GM12878 (cell line): ENCODE measurements at regions of chr6 and their contacts with region 1.

Region 1: GRCh38 chr6:17803409-17803808 is 96.7 kb upstream of the NUP153 start:
- DNase-seq: no peak
- ATAC-seq: no peak
- H3K4me3 ChIP-seq: no peak overlapping the region
- H3K27ac ChIP-seq: no peak overlapping the region
- H3K4me1 ChIP-seq: no peaks in the 10 kb centered on the region
- H3K27me3 ChIP-seq: no peaks in the 10 kb centered on the region
- CTCF ChIP-seq: no peak
- EP300 ChIP-seq: no peak
- POLR2A ChIP-seq: no peak
- RAD21 ChIP-seq: no peak

Region 2: GRCh38 chr6:17589406-17590096 is 213.9 kb before region 1 on chr6:
- CTCF ChIA-PET with region 1: interaction called, 39 read pairs
- POLR2A ChIA-PET with region 1: interaction called, 3 read pairs
- RAD21 ChIA-PET with region 1: interaction called, 3 read pairs
- SMC1A ChIA-PET with region 1: interaction called, 6 read pairs
- in situ Hi-C with region 1: loop called (anchors 5 kb)
- intact Hi-C with region 1: loop called (anchors 1 kb)
- DNase-seq: no peak
- ATAC-seq: peak; percentile 46
- H3K4me3 ChIP-seq: no peak overlapping the region
- H3K27ac ChIP-seq: no peak overlapping the region
- H3K4me1 ChIP-seq: peaks cover 5% of the 10 kb centered on the region; the same call in 1 of the 2 replicates
- H3K27me3 ChIP-seq: no peaks in the 10 kb centered on the region
- CTCF ChIP-seq: no peak
- EP300 ChIP-seq: no peak
- POLR2A ChIP-seq: no peak
- RAD21 ChIP-seq: no peak

Region 3: DNA sequence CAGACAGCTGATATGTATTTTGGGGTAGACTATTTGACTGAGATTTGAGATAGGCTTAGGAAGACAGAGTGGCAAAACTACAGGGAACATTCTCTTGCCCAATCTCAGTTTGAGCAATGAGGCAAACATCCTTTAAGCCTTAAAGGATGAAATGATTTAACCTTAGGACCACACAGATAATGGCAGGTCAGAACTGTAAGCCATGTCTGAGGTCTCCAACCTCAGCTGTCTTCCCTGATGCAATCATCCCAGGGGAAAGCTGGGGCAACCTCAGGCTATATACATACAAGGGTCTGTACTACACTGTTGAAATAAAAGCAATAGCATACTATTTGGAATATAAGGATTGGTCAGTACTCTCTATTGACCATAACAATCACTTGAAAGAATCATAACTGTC is 12.9 kb before region 1 on chr6:
- CTCF ChIA-PET with region 1: interaction called, 16 read pairs
- POLR2A ChIA-PET with region 1: no interaction called
- RAD21 ChIA-PET with region 1: no interaction called
- SMC1A ChIA-PET with region 1: interaction called, 4 read pairs
- in situ Hi-C with region 1: no loop called
- intact Hi-C with region 1: no loop called
- DNase-seq: no peak
- ATAC-seq: no peak
- H3K4me3 ChIP-seq: no peak overlapping the region
- H3K27ac ChIP-seq: no peak overlapping the region
- H3K4me1 ChIP-seq: no peaks in the 10 kb centered on the region
- H3K27me3 ChIP-seq: no peaks in the 10 kb centered on the region; a peak in 1 of 4 replicates
- CTCF ChIP-seq: no peak
- EP300 ChIP-seq: no peak
- POLR2A ChIP-seq: no peak
- RAD21 ChIP-seq: no peak

Region 4: GRCh38 chr6:17820055-17820454 is 16.6 kb after region 1 on chr6:
- CTCF ChIA-PET with region 1: interaction called, 12 read pairs
- POLR2A ChIA-PET with region 1: no interaction called
- RAD21 ChIA-PET with region 1: interaction called, 3 read pairs
- SMC1A ChIA-PET with region 1: interaction called, 16 read pairs
- in situ Hi-C with region 1: no loop called
- intact Hi-C with region 1: no loop called
- DNase-seq: no peak
- ATAC-seq: peak; percentile 60; the same call in 2 of the 3 replicates
- H3K4me3 ChIP-seq: no peak overlapping the region
- H3K27ac ChIP-seq: no peak overlapping the region
- H3K4me1 ChIP-seq: no peaks in the 10 kb centered on the region
- H3K27me3 ChIP-seq: no peaks in the 10 kb centered on the region
- CTCF ChIP-seq: no peak
- EP300 ChIP-seq: no peak
- POLR2A ChIP-seq: no peak
- RAD21 ChIP-seq: no peak